Naive thymus-derived CD4-positive, alpha-beta T cell (primary cell): ENCODE measurements at regions of chr2 and their contacts with region 1.

Region 1: DNA sequence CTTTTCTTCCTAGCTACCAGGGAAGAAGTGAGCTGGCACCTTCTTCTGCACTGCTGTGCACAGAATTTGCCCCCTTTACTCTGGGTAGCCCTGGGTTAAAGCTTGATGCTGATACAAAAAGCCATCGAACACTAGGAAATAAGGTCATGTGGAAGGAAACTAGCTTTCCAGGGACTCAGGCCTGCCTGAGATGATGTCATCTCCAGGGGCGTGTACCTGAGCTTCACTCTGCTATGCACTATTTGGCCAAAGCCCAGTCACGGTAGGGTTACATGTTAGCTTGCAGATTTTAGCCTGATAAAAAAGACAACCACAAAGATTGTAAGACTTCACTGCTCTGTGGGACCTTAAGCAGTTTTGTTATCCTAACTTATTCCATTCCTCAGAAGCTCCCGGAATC is 20.4 kb downstream of the EDAR start:
- DNase-seq: no peak
- ATAC-seq: no peak
- H3K4me3 ChIP-seq: no peak overlapping the region
- H3K4me3 Mint-ChIP-seq: peak overlapping the region in 8 of 10 donors; percentile 1 to 81 (median 54)
- H3K27ac ChIP-seq: peak overlapping the region; percentile 10
- H3K27ac Mint-ChIP-seq: peak overlapping the region in 8 of 9 donors; percentile 28 to 91 (median 72)
- H3K4me1 ChIP-seq: peaks cover 21 to 71% of the 10 kb centered on the region in 2 donors
- H3K4me1 Mint-ChIP-seq: peaks cover 21 to 100% (median 95%) of the 10 kb centered on the region in 7 donors
- H3K27me3 ChIP-seq: no peaks in the 10 kb centered on the region
- H3K27me3 Mint-ChIP-seq: no peaks in the 10 kb centered on the region

Region 2: GRCh38 chr2:108982259-108982691 is 13.7 kb after region 1 on chr2:
- CTCF ChIA-PET with region 1: interaction called, 8 read pairs
- POLR2A ChIA-PET with region 1: interaction called, 8 read pairs
- intact Hi-C with region 1: loop called in 1 of 2 experiments (anchors 1 kb)
- DNase-seq: no peak
- ATAC-seq: no peak
- H3K4me3 ChIP-seq: no peak overlapping the region
- H3K4me3 Mint-ChIP-seq: peak overlapping the region in 8 of 10 donors; percentile 5 to 96 (median 48)
- H3K27ac ChIP-seq: no peak overlapping the region
- H3K27ac Mint-ChIP-seq: peak overlapping the region in 8 of 9 donors; percentile 14 to 90 (median 76)
- H3K4me1 ChIP-seq: peaks cover 0 to 52% of the 10 kb centered on the region in 2 donors
- H3K4me1 Mint-ChIP-seq: peaks cover 18 to 100% (median 89%) of the 10 kb centered on the region in 7 donors
- H3K27me3 ChIP-seq: no peaks in the 10 kb centered on the region
- H3K27me3 Mint-ChIP-seq: peaks cover 0 to 8% (median 0%) of the 10 kb centered on the region in 5 donors

Region 3: GRCh38 chr2:109254174-109254904 is 285.7 kb after region 1 on chr2:
- CTCF ChIA-PET with region 1: no interaction called
- POLR2A ChIA-PET with region 1: no interaction called
- intact Hi-C with region 1: no loop called
- DNase-seq: no peak
- ATAC-seq: peak; percentile 32
- H3K4me3 ChIP-seq: no peak overlapping the region
- H3K4me3 Mint-ChIP-seq: peak overlapping the region in 1 of 10 donors; percentile 15
- H3K27ac ChIP-seq: no peak overlapping the region
- H3K27ac Mint-ChIP-seq: no peak overlapping the region
- H3K4me1 ChIP-seq: no peaks in the 10 kb centered on the region
- H3K4me1 Mint-ChIP-seq: peaks cover 6 to 43% (median 14%) of the 10 kb centered on the region in 7 donors
- H3K27me3 ChIP-seq: no peaks in the 10 kb centered on the region
- H3K27me3 Mint-ChIP-seq: peaks cover 0 to 10% (median 0%) of the 10 kb centered on the region in 5 donors